PC-3 (cell line): ENCODE measurements at regions of chr21 and their contacts with region 1.

Region 1: DNA sequence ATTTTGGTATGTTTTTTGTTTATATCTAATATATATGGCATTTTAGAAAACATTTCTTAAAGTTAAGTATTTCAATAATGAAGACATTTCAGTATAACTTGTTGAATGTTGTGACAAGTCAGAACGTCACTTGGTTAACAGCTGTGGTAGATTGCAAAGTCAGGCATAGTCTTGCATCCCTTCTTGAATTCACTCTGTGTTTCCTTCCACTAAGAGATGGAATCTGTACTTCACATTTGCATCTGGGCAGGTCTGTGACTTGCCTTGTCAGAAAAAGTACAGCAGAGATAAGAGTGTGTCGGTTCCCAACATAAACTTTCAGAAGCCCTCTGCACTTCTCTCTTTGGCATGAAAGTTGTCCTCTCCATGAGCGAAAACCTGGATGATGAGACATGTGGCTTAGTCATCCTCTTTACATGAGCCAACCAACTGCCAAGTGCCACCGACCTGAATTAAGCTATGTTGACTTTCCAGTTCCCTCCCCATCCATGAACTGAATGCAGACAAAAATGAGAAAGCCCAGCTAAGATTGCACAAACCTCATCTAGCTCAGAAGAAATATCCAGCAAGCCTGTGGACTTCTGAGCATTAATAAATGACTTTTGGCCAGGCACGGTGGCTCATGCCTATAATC is 1730.2 kb downstream of the MRPL39 start:
- DNase-seq: peak; percentile 63
- ATAC-seq: peak; percentile 66
- H3K4me3 ChIP-seq: no peak overlapping the region
- H3K27ac ChIP-seq: no peak overlapping the region
- H3K4me1 ChIP-seq: peaks cover 15% of the 10 kb centered on the region; the same call in 1 of the 2 replicates
- H3K27me3 ChIP-seq: no peaks in the 10 kb centered on the region
- CTCF ChIP-seq: no peak

Region 2: GRCh38 chr21:23706431-23706830 is 170.6 kb before region 1 on chr21:
- CTCF ChIA-PET with region 1: no interaction called
- POLR2A ChIA-PET with region 1: no interaction called
- intact Hi-C with region 1: no loop called
- DNase-seq: no peak
- ATAC-seq: no peak
- H3K4me3 ChIP-seq: no peak overlapping the region
- H3K27ac ChIP-seq: no peak overlapping the region
- H3K4me1 ChIP-seq: no peaks in the 10 kb centered on the region
- H3K27me3 ChIP-seq: no peaks in the 10 kb centered on the region
- CTCF ChIP-seq: no peak

Region 3: GRCh38 chr21:24353492-24353891 is 476.4 kb after region 1 on chr21:
- CTCF ChIA-PET with region 1: no interaction called
- POLR2A ChIA-PET with region 1: interaction called, 13 read pairs
- intact Hi-C with region 1: no loop called
- DNase-seq: no peak
- ATAC-seq: no peak
- H3K4me3 ChIP-seq: no peak overlapping the region
- H3K27ac ChIP-seq: no peak overlapping the region
- H3K4me1 ChIP-seq: no peaks in the 10 kb centered on the region
- H3K27me3 ChIP-seq: no peaks in the 10 kb centered on the region
- CTCF ChIP-seq: no peak